Endothelial cell of umbilical vein (primary cell): ENCODE measurements at regions of chr1 and their contacts with region 1.

Region 1: GRCh38 chr1:165144757-165145397 is 211.6 kb downstream of the LMX1A start:
- DNase-seq: peak; percentile 49
- H3K4me3 ChIP-seq: no peak overlapping the region
- H3K27ac ChIP-seq: no peak overlapping the region
- H3K4me1 ChIP-seq: no peaks in the 10 kb centered on the region
- H3K27me3 ChIP-seq: no peaks in the 10 kb centered on the region
- CTCF ChIP-seq: peak; percentile 71 to 76
- POLR2A ChIP-seq: no peak

Region 2: GRCh38 chr1:163410073-163410999 is 1734.5 kb before region 1 on chr1:
- CTCF ChIA-PET with region 1: no interaction called
- POLR2A ChIA-PET with region 1: no interaction called
- dilution Hi-C with region 1: no loop called
- intact Hi-C with region 1: loop called (anchors 10 kb)
- DNase-seq: peak; percentile 66
- H3K4me3 ChIP-seq: no peak overlapping the region
- H3K27ac ChIP-seq: no peak overlapping the region
- H3K4me1 ChIP-seq: no peaks in the 10 kb centered on the region
- H3K27me3 ChIP-seq: peaks cover 0 to 2% of the 10 kb centered on the region in 2 experiments
- CTCF ChIP-seq: peak; percentile 67 to 72
- POLR2A ChIP-seq: no peak

Region 3: GRCh38 chr1:164823486-164824279 is 321.2 kb before region 1 on chr1:
- CTCF ChIA-PET with region 1: no interaction called
- POLR2A ChIA-PET with region 1: no interaction called
- dilution Hi-C with region 1: no loop called
- intact Hi-C with region 1: no loop called
- DNase-seq: no peak
- H3K4me3 ChIP-seq: no peak overlapping the region
- H3K27ac ChIP-seq: no peak overlapping the region
- H3K4me1 ChIP-seq: no peaks in the 10 kb centered on the region
- H3K27me3 ChIP-seq: no peaks in the 10 kb centered on the region
- CTCF ChIP-seq: no peak
- POLR2A ChIP-seq: no peak

Region 4: GRCh38 chr1:164922585-164922984 is 222.3 kb before region 1 on chr1:
- CTCF ChIA-PET with region 1: no interaction called
- POLR2A ChIA-PET with region 1: no interaction called
- dilution Hi-C with region 1: no loop called
- intact Hi-C with region 1: no loop called
- DNase-seq: no peak
- H3K4me3 ChIP-seq: no peak overlapping the region
- H3K27ac ChIP-seq: no peak overlapping the region
- H3K4me1 ChIP-seq: no peaks in the 10 kb centered on the region
- H3K27me3 ChIP-seq: no peaks in the 10 kb centered on the region
- CTCF ChIP-seq: no peak
- POLR2A ChIP-seq: no peak

Region 5: DNA sequence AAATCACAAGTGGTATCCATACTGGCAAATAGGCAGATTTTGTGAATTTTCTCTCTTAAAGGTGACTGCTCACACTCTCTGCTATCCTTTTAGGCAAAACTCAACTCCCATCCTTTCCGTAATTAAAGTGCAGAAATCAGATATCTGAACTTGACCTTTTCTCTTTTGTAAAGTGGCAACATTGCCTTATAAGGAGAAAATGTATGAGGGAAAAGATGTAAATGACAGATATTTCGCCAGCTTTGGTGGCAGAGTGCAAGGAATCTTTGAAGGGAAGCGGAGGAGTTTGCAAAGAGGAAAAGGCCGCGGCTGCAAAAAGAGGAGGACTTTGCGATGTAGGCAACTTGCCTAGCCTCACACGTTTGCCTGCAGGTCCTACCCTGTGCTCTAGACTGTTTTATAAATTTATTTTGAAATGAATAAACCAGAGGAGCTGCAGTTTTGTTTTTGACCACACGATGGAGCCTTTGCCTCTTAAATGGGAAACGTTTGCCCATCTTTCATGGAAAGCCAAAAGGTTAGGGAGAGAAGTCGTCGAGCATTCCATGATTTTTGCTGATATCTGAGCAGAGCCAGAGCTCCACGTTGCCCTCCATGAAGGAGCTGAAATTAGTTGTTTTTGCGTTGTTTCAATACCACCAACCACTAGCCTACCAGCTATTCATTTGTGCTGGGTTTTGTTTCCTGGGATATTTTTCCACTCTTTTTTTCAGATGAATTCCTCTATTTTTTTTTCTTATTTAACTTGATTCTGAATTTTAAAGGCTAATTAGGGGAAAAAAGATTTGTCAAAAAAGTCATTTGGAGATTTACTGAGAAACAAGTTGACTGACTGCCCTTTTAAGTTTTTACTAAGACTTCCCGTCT is 30.6 kb before region 1 on chr1:
- CTCF ChIA-PET with region 1: interaction called, 10 read pairs
- POLR2A ChIA-PET with region 1: no interaction called
- dilution Hi-C with region 1: no loop called
- intact Hi-C with region 1: loop called (anchors 2 kb)
- DNase-seq: peak; percentile 48
- H3K4me3 ChIP-seq: no peak overlapping the region
- H3K27ac ChIP-seq: no peak overlapping the region
- H3K4me1 ChIP-seq: no peaks in the 10 kb centered on the region
- H3K27me3 ChIP-seq: peaks cover 1 to 10% of the 10 kb centered on the region in 2 experiments
- CTCF ChIP-seq: peak; percentile 56 to 68
- POLR2A ChIP-seq: no peak

Region 6: GRCh38 chr1:165290148-165290547 is 145.3 kb after region 1 on chr1:
- CTCF ChIA-PET with region 1: no interaction called
- POLR2A ChIA-PET with region 1: no interaction called
- dilution Hi-C with region 1: no loop called
- intact Hi-C with region 1: loop called (anchors 10 kb)
- DNase-seq: no peak
- H3K4me3 ChIP-seq: no peak overlapping the region
- H3K27ac ChIP-seq: no peak overlapping the region
- H3K4me1 ChIP-seq: no peaks in the 10 kb centered on the region
- H3K27me3 ChIP-seq: no peaks in the 10 kb centered on the region
- CTCF ChIP-seq: no peak
- POLR2A ChIP-seq: no peak